Endothelial cell of umbilical vein (primary cell): ENCODE measurements at regions of chr15 and their contacts with region 1.

Region 1: GRCh38 chr15:60916679-60917460 is 312.2 kb downstream of the RORA start:
- DNase-seq: peak; percentile 80
- H3K4me3 ChIP-seq: no peak overlapping the region
- H3K27ac ChIP-seq: no peak overlapping the region
- H3K4me1 ChIP-seq: no peaks in the 10 kb centered on the region
- H3K27me3 ChIP-seq: no peaks in the 10 kb centered on the region
- CTCF ChIP-seq: peak; percentile 72 to 87
- POLR2A ChIP-seq: no peak

Region 2: GRCh38 chr15:60408438-60409105 is 508.3 kb before region 1 on chr15:
- CTCF ChIA-PET with region 1: no interaction called
- POLR2A ChIA-PET with region 1: no interaction called
- dilution Hi-C with region 1: no loop called
- intact Hi-C with region 1: no loop called
- DNase-seq: peak; percentile 78
- H3K4me3 ChIP-seq: no peak overlapping the region
- H3K27ac ChIP-seq: peak overlapping the region; percentile 62
- H3K4me1 ChIP-seq: peaks cover 27% of the 10 kb centered on the region
- H3K27me3 ChIP-seq: no peaks in the 10 kb centered on the region
- CTCF ChIP-seq: no peak
- POLR2A ChIP-seq: no peak

Region 3: DNA sequence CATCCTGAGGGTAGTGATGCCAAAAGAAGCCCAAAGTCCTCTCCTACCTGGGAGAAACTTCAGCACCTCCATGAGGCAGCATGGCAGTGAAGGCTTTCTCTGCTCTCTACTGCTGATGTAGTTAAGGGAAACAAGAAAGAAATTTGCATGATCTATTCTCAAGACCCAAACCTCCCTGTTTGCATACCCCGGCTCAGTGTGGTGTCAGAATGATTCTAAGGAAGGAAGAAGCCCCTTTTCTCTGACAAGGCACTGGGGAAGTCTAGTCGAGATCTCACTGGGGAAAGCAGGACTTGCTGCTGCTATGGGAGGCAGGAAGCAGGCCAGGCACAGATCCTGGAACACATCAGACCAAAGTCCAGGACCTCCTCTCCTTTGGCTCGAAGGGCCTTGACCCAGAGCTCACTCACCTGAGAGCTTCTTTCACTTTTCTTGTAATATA is 348.5 kb before region 1 on chr15:
- CTCF ChIA-PET with region 1: interaction called, 3 read pairs
- POLR2A ChIA-PET with region 1: no interaction called
- dilution Hi-C with region 1: loop called (anchors 25 kb)
- intact Hi-C with region 1: no loop called
- DNase-seq: no peak
- H3K4me3 ChIP-seq: no peak overlapping the region
- H3K27ac ChIP-seq: no peak overlapping the region
- H3K4me1 ChIP-seq: no peaks in the 10 kb centered on the region
- H3K27me3 ChIP-seq: no peaks in the 10 kb centered on the region
- CTCF ChIP-seq: no peak
- POLR2A ChIP-seq: no peak

Region 4: DNA sequence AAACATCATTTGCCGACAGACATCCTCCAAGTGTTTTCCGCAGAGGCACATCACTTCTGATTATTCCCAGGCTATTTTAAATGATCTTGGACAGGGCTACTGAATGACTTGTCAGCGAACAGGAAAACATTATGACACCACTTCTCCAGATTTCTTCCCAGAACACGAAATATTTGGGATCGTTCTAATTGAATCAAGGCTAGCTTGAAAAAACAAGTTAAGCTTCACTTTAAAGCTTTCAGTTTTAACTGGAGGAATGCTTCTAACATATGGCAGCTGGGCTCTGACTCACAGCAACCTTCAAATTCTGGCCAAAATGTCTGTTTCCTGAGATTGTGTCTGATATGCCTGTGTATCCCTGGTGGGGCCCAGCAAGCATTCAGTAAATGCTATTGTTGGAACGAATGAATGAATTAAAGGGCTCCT is 311.0 kb before region 1 on chr15:
- CTCF ChIA-PET with region 1: interaction called, 15 read pairs
- POLR2A ChIA-PET with region 1: no interaction called
- dilution Hi-C with region 1: no loop called
- intact Hi-C with region 1: no loop called
- DNase-seq: peak; percentile 99
- H3K4me3 ChIP-seq: peak overlapping the region in 2 of 3 experiments; percentile 60 to 77
- H3K27ac ChIP-seq: peak overlapping the region; percentile 97
- H3K4me1 ChIP-seq: peaks cover 27% of the 10 kb centered on the region
- H3K27me3 ChIP-seq: no peaks in the 10 kb centered on the region
- CTCF ChIP-seq: no peak
- POLR2A ChIP-seq: peak; percentile 29

Region 5: GRCh38 chr15:60787837-60788691 is 128.8 kb before region 1 on chr15:
- CTCF ChIA-PET with region 1: interaction called, 15 read pairs
- POLR2A ChIA-PET with region 1: no interaction called
- dilution Hi-C with region 1: no loop called
- intact Hi-C with region 1: no loop called
- DNase-seq: peak; percentile 31
- H3K4me3 ChIP-seq: no peak overlapping the region
- H3K27ac ChIP-seq: no peak overlapping the region
- H3K4me1 ChIP-seq: no peaks in the 10 kb centered on the region
- H3K27me3 ChIP-seq: no peaks in the 10 kb centered on the region
- CTCF ChIP-seq: peak; percentile 38 to 39
- POLR2A ChIP-seq: no peak

Region 6: DNA sequence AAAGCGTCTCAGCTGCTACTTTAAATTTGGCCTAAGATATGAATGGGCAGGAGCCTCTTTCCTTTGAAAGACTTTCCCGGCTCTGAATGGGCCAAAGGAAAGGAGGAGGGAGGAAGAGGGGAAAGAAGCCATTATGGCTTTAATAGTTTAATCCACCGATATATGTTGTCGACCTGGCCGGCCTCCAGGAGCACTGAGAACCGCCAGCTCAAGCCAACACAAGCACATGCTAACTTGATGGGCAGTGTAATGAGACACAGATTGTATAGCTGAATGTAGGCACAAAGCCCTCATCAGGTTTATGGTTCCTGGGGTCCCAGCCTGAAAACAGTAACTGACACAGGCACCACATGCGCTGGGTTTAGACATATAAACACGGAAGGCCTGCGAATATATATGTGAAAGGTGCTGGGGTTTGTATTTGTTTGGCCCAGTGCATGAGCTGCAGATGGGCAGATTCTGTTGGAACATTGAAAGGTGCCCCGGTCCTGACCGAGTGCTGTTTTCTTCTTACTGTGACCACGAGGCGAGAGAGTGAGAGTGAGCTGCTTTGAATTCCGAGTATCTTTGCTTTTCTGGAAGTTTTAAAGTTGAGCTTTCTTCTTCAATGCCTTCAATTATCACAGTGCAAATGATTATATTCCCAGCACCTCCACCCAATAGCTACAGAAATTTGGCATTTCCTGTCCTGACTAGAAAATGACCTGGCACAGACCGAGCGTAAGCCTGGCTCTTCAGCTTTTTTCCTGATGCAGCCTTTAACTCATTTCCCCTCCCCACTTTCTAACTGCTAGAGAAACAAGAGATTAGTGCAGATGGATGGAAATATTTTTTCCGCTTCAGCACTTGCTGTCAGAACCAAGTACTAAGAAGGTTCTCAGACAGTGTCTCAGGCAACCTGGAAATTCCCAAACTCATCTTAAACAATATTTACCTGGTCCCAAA is 44.9 kb after region 1 on chr15:
- CTCF ChIA-PET with region 1: interaction called, 11 read pairs
- POLR2A ChIA-PET with region 1: no interaction called
- dilution Hi-C with region 1: no loop called
- intact Hi-C with region 1: no loop called
- DNase-seq: peak; percentile 84
- H3K4me3 ChIP-seq: no peak overlapping the region
- H3K27ac ChIP-seq: no peak overlapping the region
- H3K4me1 ChIP-seq: peaks cover 11% of the 10 kb centered on the region
- H3K27me3 ChIP-seq: no peaks in the 10 kb centered on the region
- CTCF ChIP-seq: no peak
- POLR2A ChIP-seq: no peak

Region 7: GRCh38 chr15:61834076-61834697 is 917.3 kb after region 1 on chr15:
- CTCF ChIA-PET with region 1: interaction called, 9 read pairs
- POLR2A ChIA-PET with region 1: no interaction called
- dilution Hi-C with region 1: no loop called
- intact Hi-C with region 1: loop called (anchors 10 kb)
- DNase-seq: peak; percentile 72
- H3K4me3 ChIP-seq: no peak overlapping the region
- H3K27ac ChIP-seq: no peak overlapping the region
- H3K4me1 ChIP-seq: no peaks in the 10 kb centered on the region
- H3K27me3 ChIP-seq: peaks cover 4 to 7% of the 10 kb centered on the region in 2 experiments
- CTCF ChIP-seq: peak; percentile 87 to 98
- POLR2A ChIP-seq: no peak